ENCODE measurements at regions of chr2 and their contacts with region 1.

Region 1: GRCh38 chr2:101151141-101151858 is at the start of gene TBC1D8:
- DNase-seq: peak; percentile 84
- ATAC-seq: peak; percentile 67
- H3K4me3 ChIP-seq: peak within 1 kb of the TSS; percentile 83 to 97 (median 89)
- H3K27ac ChIP-seq: peak within 1 kb of the TSS; percentile 74
- H3K4me1 ChIP-seq: peaks cover 61% of the 10 kb centered on the region
- H3K27me3 ChIP-seq: no peaks in the 10 kb centered on the region; a peak in 1 of 5 replicates
- CTCF ChIP-seq: peak; percentile 15; the same call in 1 of the 2 replicates
- EP300 ChIP-seq: peak in 1 of 2 experiments; percentile 28; a peak in 1 of 4 replicates
- POLR2A ChIP-seq: peak; percentile 81 to 94
- RAD21 ChIP-seq: no peak
- total RNA-seq, gene TBC1D8: 24.6 and 45.1 TPM in 2 replicates

Region 2: GRCh38 chr2:100580367-100581276 is 570.7 kb before region 1 on chr2:
- CTCF ChIA-PET with region 1: no interaction called
- POLR2A ChIA-PET with region 1: no interaction called
- in situ Hi-C with region 1: loop called (anchors 25 kb)
- intact Hi-C with region 1: no loop called
- DNase-seq: no peak
- ATAC-seq: peak; percentile 43
- H3K4me3 ChIP-seq: no peak overlapping the region
- H3K27ac ChIP-seq: no peak overlapping the region
- H3K4me1 ChIP-seq: no peaks in the 10 kb centered on the region
- H3K27me3 ChIP-seq: no peaks in the 10 kb centered on the region
- CTCF ChIP-seq: no peak
- EP300 ChIP-seq: no peak
- POLR2A ChIP-seq: no peak
- RAD21 ChIP-seq: no peak

Region 3: GRCh38 chr2:101007415-101008345 is 143.6 kb before region 1 on chr2:
- CTCF ChIA-PET with region 1: interaction called, 53 read pairs
- POLR2A ChIA-PET with region 1: interaction called, 41 read pairs
- in situ Hi-C with region 1: no loop called
- intact Hi-C with region 1: loop called (anchors 1 kb)
- DNase-seq: no peak
- ATAC-seq: peak; percentile 7
- H3K4me3 ChIP-seq: no peak overlapping the region
- H3K27ac ChIP-seq: peak overlapping the region; percentile 12
- H3K4me1 ChIP-seq: peaks cover 34% of the 10 kb centered on the region
- H3K27me3 ChIP-seq: no peaks in the 10 kb centered on the region; a peak in 1 of 5 replicates
- CTCF ChIP-seq: no peak
- EP300 ChIP-seq: no peak
- POLR2A ChIP-seq: peak; percentile 53 to 75
- RAD21 ChIP-seq: no peak

Region 4: GRCh38 chr2:101036562-101037457 is 114.5 kb before region 1 on chr2:
- CTCF ChIA-PET with region 1: interaction called, 93 read pairs
- POLR2A ChIA-PET with region 1: interaction called, 15 read pairs
- in situ Hi-C with region 1: loop called (anchors 5 kb)
- intact Hi-C with region 1: loop called (anchors 1 kb)
- DNase-seq: peak; percentile 33
- ATAC-seq: no peak
- H3K4me3 ChIP-seq: no peak overlapping the region
- H3K27ac ChIP-seq: no peak overlapping the region
- H3K4me1 ChIP-seq: no peaks in the 10 kb centered on the region
- H3K27me3 ChIP-seq: no peaks in the 10 kb centered on the region
- CTCF ChIP-seq: peak; percentile 56
- EP300 ChIP-seq: no peak
- POLR2A ChIP-seq: no peak
- RAD21 ChIP-seq: peak; percentile 69

Region 5: GRCh38 chr2:101113396-101114267 is 37.7 kb before region 1 on chr2:
- CTCF ChIA-PET with region 1: no interaction called
- POLR2A ChIA-PET with region 1: interaction called, 29 read pairs
- in situ Hi-C with region 1: no loop called
- intact Hi-C with region 1: loop called (anchors 2 kb)
- DNase-seq: peak; percentile 88
- ATAC-seq: no peak
- H3K4me3 ChIP-seq: peak overlapping the region in 1 of 3 experiments; percentile 13; a peak in 1 of 6 replicates
- H3K27ac ChIP-seq: peak overlapping the region; percentile 100
- H3K4me1 ChIP-seq: peaks cover 96% of the 10 kb centered on the region
- H3K27me3 ChIP-seq: no peaks in the 10 kb centered on the region
- CTCF ChIP-seq: no peak
- EP300 ChIP-seq: peak in 1 of 2 experiments; percentile 88; a peak in 2 of 4 replicates
- POLR2A ChIP-seq: no peak
- RAD21 ChIP-seq: no peak

Region 6: GRCh38 chr2:101162561-101163330 is 11.4 kb after region 1 on chr2:
- CTCF ChIA-PET with region 1: no interaction called
- POLR2A ChIA-PET with region 1: no interaction called
- in situ Hi-C with region 1: no loop called
- intact Hi-C with region 1: no loop called
- DNase-seq: no peak
- ATAC-seq: no peak
- H3K4me3 ChIP-seq: no peak overlapping the region
- H3K27ac ChIP-seq: no peak overlapping the region
- H3K4me1 ChIP-seq: peaks cover 6% of the 10 kb centered on the region; the same call in 1 of the 2 replicates
- H3K27me3 ChIP-seq: no peaks in the 10 kb centered on the region
- CTCF ChIP-seq: no peak
- EP300 ChIP-seq: no peak
- POLR2A ChIP-seq: no peak
- RAD21 ChIP-seq: no peak

Region 7: DNA sequence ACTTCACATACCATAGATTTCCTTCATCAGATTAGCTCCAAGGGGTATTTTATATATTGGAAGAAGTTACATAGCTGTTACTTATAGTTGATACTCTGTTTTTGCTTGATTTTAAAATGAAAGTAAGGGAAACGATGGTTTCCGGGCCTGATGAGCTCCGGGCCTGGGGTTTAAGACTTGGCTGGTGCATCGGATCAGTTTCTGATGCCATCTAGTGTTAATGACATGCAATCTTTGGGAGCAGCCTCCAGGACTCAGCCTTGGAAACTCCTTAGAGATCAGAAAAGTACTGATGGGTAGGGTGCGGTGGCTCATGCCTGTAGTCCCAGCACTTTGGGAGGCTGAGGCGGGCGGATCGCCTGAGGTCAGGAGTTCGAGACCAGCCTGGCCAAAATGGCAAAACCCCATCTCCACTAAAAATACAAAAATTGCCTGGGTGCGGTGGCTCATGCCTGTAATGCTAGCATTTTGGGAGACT is 54.3 kb after region 1 on chr2:
- CTCF ChIA-PET with region 1: no interaction called
- POLR2A ChIA-PET with region 1: interaction called, 4 read pairs
- in situ Hi-C with region 1: no loop called
- intact Hi-C with region 1: loop called (anchors 2 kb)
- DNase-seq: peak; percentile 83
- ATAC-seq: peak; percentile 72
- H3K4me3 ChIP-seq: peak overlapping the region; percentile 54 to 66 (median 55)
- H3K27ac ChIP-seq: peak overlapping the region; percentile 30
- H3K4me1 ChIP-seq: peaks cover 51% of the 10 kb centered on the region
- H3K27me3 ChIP-seq: no peaks in the 10 kb centered on the region
- CTCF ChIP-seq: peak; percentile 88
- EP300 ChIP-seq: no peak
- POLR2A ChIP-seq: no peak
- RAD21 ChIP-seq: peak; percentile 75

Measured in HepG2 (cell line).